ENCODE measurements at regions of chr11 and their contacts with region 1.

Region 1: GRCh38 chr11:122781378-122782195 is 56.7 kb upstream of the CRTAM start:
- H3K4me3 ChIP-seq: no peak overlapping the region
- H3K27ac ChIP-seq: no peak overlapping the region
- H3K4me1 ChIP-seq: no peaks in the 10 kb centered on the region
- CTCF ChIP-seq: peak; percentile 72

Region 2: DNA sequence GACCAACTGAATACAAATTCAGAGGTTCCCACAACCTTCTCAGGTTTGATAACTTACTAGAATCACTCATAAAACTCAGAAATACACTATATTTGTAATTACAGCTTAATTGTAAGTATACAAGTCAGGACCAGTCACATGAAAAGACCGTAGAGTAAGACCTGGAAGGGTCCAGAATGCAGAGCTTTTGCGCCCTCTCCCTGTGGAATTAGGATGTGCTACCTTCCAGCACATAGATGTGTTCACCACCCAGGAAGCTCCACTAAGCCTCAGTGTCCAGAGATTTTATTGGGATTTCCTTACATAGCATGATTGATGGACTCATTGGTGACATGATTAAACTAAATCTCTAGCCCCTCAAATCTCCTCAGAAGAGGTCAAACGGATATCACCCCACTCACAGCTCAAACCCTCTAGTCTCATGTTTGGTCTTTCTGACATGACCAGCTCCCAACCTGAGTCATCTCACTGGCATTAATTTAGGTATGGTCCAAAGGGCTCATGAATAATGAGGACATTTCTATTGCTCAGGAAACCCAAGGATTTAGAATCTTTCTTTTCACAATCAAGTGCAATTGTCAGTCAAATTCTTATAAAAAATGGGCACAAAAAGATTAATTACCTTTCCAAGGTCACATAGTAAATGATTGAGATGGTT is 203.3 kb before region 1 on chr11:
- CTCF ChIA-PET with region 1: interaction called, 11 read pairs
- POLR2A ChIA-PET with region 1: no interaction called
- H3K4me3 ChIP-seq: no peak overlapping the region
- H3K27ac ChIP-seq: no peak overlapping the region
- H3K4me1 ChIP-seq: no peaks in the 10 kb centered on the region
- CTCF ChIP-seq: no peak

Region 3: DNA sequence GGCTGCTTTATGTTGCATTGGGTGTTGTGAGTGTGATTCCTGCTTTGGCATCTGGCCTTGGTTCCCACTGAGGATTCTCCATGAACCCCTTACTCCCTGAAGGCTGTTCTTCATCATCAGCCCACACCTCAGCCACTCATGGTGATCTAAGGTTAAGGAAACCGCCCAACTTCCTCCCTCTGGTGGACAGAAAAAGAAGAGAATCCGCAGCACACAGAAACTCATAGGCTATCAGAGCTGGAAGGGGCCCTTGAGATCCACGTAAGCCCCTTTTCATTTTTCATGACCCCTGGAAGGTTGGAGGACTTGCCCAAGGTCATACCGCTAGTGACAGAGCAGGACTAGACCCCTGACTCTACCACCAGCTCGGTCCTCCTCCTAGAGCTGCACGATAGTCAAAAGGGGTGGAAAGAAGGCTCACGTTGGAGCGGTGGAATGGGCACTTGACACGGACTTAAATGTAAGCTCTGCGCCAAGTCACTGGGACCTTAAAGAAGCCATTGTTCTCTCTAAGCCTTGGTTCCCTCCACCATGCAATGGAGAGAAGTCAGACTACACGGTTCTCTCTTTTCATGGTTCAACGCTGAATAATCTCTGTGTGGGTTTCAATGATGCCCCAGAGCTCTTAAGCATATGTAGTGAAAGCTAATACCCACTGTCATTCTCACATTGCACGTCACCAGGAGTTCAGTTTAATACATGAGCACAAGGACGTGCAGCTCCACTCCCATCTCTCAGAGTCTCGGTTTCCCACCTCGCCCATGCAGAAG is 26.8 kb before region 1 on chr11:
- CTCF ChIA-PET with region 1: interaction called, 13 read pairs
- POLR2A ChIA-PET with region 1: no interaction called
- H3K4me3 ChIP-seq: no peak overlapping the region
- H3K27ac ChIP-seq: no peak overlapping the region
- H3K4me1 ChIP-seq: no peaks in the 10 kb centered on the region
- CTCF ChIP-seq: no peak

Region 4: DNA sequence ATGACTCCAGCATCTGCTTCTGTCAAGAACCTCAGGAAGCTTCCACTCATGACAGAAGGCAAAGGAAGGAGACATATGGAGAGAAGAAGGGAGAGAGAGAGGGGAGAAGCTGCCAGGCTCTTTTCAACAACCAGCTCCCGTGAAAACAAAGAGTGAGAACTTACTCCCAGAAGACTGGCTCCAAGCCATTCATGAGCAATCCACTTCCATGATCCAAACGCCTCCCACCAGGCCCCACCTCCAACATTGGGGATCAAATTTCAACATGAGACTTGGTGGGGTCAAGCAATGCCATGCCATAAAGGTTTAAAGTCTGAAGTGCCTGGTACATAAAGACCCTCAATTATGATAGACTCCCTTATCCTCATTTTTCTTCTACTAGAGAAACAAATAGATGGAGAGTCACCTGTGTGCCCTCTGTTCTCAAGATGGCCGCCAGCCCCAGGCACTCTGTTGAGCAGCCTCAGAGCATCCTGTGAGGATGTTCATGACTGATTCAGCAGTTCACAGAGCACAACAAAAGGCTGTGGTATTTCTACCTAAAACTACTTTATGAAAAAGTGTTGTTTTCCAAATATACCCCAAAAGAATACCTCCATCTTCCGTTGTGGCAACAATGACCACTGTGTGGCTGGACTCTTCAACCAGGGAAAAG is 12.3 kb before region 1 on chr11:
- CTCF ChIA-PET with region 1: interaction called, 31 read pairs
- POLR2A ChIA-PET with region 1: no interaction called
- H3K4me3 ChIP-seq: no peak overlapping the region
- H3K27ac ChIP-seq: no peak overlapping the region
- H3K4me1 ChIP-seq: no peaks in the 10 kb centered on the region
- CTCF ChIP-seq: no peak

Region 5: GRCh38 chr11:122796128-122796717 is 14.6 kb after region 1 on chr11:
- CTCF ChIA-PET with region 1: interaction called, 14 read pairs
- POLR2A ChIA-PET with region 1: no interaction called
- H3K4me3 ChIP-seq: no peak overlapping the region
- H3K27ac ChIP-seq: no peak overlapping the region
- H3K4me1 ChIP-seq: no peaks in the 10 kb centered on the region
- CTCF ChIP-seq: no peak